K562 (cell line): ENCODE measurements at regions of chr6 and their contacts with region 1.

Region 1: DNA sequence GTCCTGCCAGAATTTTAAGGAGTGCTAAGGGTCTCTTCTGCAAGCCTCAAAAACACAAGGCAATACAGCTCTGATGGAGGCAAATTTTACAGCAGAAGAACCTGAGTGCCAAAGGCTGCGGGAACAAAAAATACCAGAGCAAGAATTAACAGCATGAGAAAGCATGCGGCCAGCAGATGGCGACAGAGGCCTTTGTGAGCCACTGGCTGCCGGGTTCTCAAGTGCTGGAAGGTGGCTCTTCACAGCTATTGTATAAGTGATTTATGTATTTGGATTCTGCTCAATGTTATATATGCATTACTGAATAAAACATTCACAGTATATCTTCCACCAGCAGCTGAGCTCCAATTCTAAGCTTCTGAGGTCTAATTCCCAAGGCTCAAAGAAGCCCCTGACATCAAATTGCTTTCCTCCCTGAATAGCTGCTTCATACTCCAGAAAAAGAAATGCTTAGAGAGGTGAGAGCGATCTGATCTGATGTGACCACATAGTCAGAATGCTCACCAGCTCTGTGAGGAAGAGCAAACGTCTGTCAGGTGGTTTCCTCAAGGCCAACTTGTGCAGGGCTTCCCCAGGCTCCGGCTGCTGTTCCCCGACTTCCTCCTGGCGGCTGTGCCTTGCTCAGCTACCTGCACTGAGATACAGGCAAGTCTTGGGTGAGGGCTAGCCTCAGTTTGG is 58.6 kb downstream of the PPP1R3G start:
- DNase-seq: peak; percentile 70 to 86 (median 76)
- ATAC-seq: peak; percentile 95
- H3K4me3 ChIP-seq: no peak overlapping the region
- H3K27ac ChIP-seq: no peak overlapping the region
- H3K4me1 ChIP-seq: no peaks in the 10 kb centered on the region
- H3K27me3 ChIP-seq: no peaks in the 10 kb centered on the region
- CTCF ChIP-seq: peak; percentile 91 to 97 (median 94)
- EP300 ChIP-seq: no peak
- POLR2A ChIP-seq: no peak
- RAD21 ChIP-seq: peak; percentile 96 to 97

Region 2: DNA sequence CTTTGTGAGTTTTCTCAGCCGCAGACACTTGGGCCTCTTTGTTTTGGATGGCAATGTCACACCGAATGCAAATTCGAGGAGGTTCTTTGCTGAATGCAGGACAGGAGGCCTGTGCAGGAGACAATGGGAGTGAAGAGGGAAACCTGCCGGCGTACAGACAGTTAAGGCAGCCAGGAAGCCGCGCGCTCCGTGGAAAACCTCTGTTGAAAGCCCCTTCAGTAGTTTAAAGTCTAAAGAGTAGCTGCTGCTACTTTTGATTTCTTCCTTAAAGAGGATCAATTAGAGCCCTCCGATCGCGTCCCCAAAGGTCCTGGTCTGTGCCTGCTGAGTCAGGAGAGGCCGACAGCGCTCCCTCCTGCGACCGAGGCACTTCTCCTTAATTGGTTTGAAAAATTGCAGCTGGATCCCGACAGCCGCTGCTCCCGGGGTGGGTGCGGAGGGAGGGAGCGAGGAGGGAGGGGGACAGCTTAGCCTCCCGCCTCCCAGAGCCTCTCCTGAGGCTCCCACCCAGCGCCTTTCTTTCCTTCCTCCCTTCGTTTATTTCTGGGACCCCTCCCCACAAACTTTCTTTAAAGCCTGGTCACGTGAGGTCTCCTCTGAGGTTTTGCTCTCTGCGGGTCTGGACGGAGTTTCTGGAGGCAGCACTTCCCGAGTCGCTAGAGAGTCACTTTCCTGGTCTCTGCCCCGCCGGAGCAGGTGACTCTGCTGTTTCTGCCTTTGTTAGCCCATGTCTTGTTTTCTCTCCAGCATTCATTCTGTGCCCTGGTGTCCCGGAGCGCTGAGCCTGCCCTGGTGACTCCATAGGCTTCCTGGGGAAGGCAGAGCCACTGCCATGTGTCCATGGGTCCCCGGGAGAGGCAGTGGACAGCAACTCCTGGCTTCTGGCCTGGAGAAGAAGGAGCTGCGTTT is 117.6 kb before region 1 on chr6:
- CTCF ChIA-PET with region 1: no interaction called
- POLR2A ChIA-PET with region 1: no interaction called
- in situ Hi-C with region 1: no loop called
- intact Hi-C with region 1: no loop called
- DNase-seq: peak; percentile 36 to 58 (median 47)
- ATAC-seq: peak; percentile 62
- H3K4me3 ChIP-seq: peak overlapping the region; percentile 22; the same call in 1 of the 2 replicates
- H3K27ac ChIP-seq: peak overlapping the region; percentile 49; the same call in 2 of the 3 replicates
- H3K4me1 ChIP-seq: peaks cover 11% of the 10 kb centered on the region in 2 experiments; a peak in 4 of 5 replicates
- H3K27me3 ChIP-seq: no peaks in the 10 kb centered on the region
- CTCF ChIP-seq: peak in 2 of 3 experiments; percentile 12 to 15; a peak in 2 of 6 replicates
- EP300 ChIP-seq: no peak
- POLR2A ChIP-seq: no peak
- RAD21 ChIP-seq: peak in 1 of 2 experiments; percentile 24; a peak in 1 of 4 replicates

Region 3: GRCh38 chr6:5058254-5058653 is 85.5 kb before region 1 on chr6:
- CTCF ChIA-PET with region 1: interaction called, 3 read pairs
- POLR2A ChIA-PET with region 1: interaction called, 3 read pairs
- in situ Hi-C with region 1: no loop called
- intact Hi-C with region 1: loop called (anchors 5 kb)
- DNase-seq: no peak
- ATAC-seq: peak; percentile 51
- H3K4me3 ChIP-seq: no peak overlapping the region
- H3K27ac ChIP-seq: no peak overlapping the region
- H3K4me1 ChIP-seq: no peaks in the 10 kb centered on the region
- H3K27me3 ChIP-seq: peaks cover 11 to 23% of the 10 kb centered on the region in 2 experiments; a peak in 4 of 5 replicates
- CTCF ChIP-seq: no peak
- EP300 ChIP-seq: no peak
- POLR2A ChIP-seq: no peak
- RAD21 ChIP-seq: no peak

Region 4: GRCh38 chr6:5078121-5078669 is 65.6 kb before region 1 on chr6:
- CTCF ChIA-PET with region 1: no interaction called
- POLR2A ChIA-PET with region 1: no interaction called
- in situ Hi-C with region 1: no loop called
- intact Hi-C with region 1: no loop called
- DNase-seq: peak; percentile 45 to 57 (median 49)
- ATAC-seq: peak; percentile 95
- H3K4me3 ChIP-seq: no peak overlapping the region
- H3K27ac ChIP-seq: no peak overlapping the region
- H3K4me1 ChIP-seq: peaks cover 0 to 2% of the 10 kb centered on the region in 2 experiments; a peak in 2 of 5 replicates
- H3K27me3 ChIP-seq: peaks cover 8 to 30% of the 10 kb centered on the region in 2 experiments; a peak in 3 of 5 replicates
- CTCF ChIP-seq: peak; percentile 34 to 50 (median 50); a peak in 5 of 6 replicates
- EP300 ChIP-seq: no peak
- POLR2A ChIP-seq: no peak
- RAD21 ChIP-seq: peak in 1 of 2 experiments; percentile 47; a peak in 2 of 4 replicates

Region 5: GRCh38 chr6:5103250-5103649 is 40.5 kb before region 1 on chr6:
- CTCF ChIA-PET with region 1: no interaction called
- POLR2A ChIA-PET with region 1: no interaction called
- in situ Hi-C with region 1: no loop called
- intact Hi-C with region 1: no loop called
- DNase-seq: peak in 1 of 4 experiments; percentile 19
- ATAC-seq: no peak
- H3K4me3 ChIP-seq: no peak overlapping the region
- H3K27ac ChIP-seq: no peak overlapping the region
- H3K4me1 ChIP-seq: no peaks in the 10 kb centered on the region; a peak in 1 of 5 replicates
- H3K27me3 ChIP-seq: no peaks in the 10 kb centered on the region
- CTCF ChIP-seq: no peak
- EP300 ChIP-seq: no peak
- POLR2A ChIP-seq: no peak
- RAD21 ChIP-seq: no peak

Region 6: DNA sequence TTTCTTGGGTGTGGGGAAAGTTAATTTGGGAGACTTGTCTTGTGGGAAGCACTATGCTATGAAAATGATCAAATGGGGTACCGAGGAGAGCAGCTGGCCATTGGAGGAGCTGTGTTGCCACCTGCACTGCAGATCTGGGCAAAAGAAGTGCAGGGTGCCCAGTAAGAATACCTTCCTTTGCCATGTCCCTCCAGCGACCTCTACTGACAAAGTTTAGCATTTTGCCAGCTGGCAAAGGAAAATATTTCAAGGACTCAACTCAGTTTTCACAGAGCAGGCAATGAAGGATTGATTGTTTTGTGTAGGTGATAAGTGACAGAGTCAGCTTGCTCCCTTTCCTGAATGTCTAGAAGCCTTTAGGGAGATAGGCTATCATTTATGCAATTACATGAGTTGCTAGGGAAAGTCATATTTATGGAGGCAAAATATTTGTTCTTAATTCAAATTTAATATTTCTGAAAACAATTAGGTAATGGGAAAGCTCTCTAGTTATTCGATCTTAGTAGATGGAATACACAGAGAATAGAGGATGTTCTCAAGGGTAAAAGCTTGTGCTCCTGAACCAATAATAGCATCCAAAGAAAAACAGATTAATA is 236.0 kb after region 1 on chr6:
- CTCF ChIA-PET with region 1: interaction called, 4 read pairs
- POLR2A ChIA-PET with region 1: no interaction called
- in situ Hi-C with region 1: no loop called
- intact Hi-C with region 1: loop called (anchors 1 kb)
- DNase-seq: peak; percentile 16 to 64 (median 32)
- ATAC-seq: peak; percentile 82
- H3K4me3 ChIP-seq: no peak overlapping the region
- H3K27ac ChIP-seq: no peak overlapping the region
- H3K4me1 ChIP-seq: no peaks in the 10 kb centered on the region; a peak in 1 of 5 replicates
- H3K27me3 ChIP-seq: no peaks in the 10 kb centered on the region
- CTCF ChIP-seq: peak; percentile 74 to 89 (median 83)
- EP300 ChIP-seq: no peak
- POLR2A ChIP-seq: no peak
- RAD21 ChIP-seq: peak; percentile 52 to 87

Region 7: GRCh38 chr6:5398530-5398929 is 254.8 kb after region 1 on chr6:
- CTCF ChIA-PET with region 1: interaction called, 37 read pairs
- POLR2A ChIA-PET with region 1: interaction called, 3 read pairs
- in situ Hi-C with region 1: loop called (anchors 5 kb)
- intact Hi-C with region 1: loop called (anchors 1 kb)
- DNase-seq: peak; percentile 32 to 67 (median 43)
- ATAC-seq: peak; percentile 93
- H3K4me3 ChIP-seq: no peak overlapping the region
- H3K27ac ChIP-seq: no peak overlapping the region
- H3K4me1 ChIP-seq: 0 out of 5 replicates have a peak, but pooled peaks cover 0 to 4% of the 10 kb centered on the region in 2 experiments
- H3K27me3 ChIP-seq: no peaks in the 10 kb centered on the region
- CTCF ChIP-seq: peak; percentile 47 to 77 (median 59); a peak in 5 of 6 replicates
- EP300 ChIP-seq: no peak
- POLR2A ChIP-seq: no peak
- RAD21 ChIP-seq: peak; percentile 62 to 82